Activated B cell treated with CpG ODN at 0.5 μM for 24 hours (primary cell): ENCODE measurements at regions of chr6 and their contacts with region 1.

Region 1: DNA sequence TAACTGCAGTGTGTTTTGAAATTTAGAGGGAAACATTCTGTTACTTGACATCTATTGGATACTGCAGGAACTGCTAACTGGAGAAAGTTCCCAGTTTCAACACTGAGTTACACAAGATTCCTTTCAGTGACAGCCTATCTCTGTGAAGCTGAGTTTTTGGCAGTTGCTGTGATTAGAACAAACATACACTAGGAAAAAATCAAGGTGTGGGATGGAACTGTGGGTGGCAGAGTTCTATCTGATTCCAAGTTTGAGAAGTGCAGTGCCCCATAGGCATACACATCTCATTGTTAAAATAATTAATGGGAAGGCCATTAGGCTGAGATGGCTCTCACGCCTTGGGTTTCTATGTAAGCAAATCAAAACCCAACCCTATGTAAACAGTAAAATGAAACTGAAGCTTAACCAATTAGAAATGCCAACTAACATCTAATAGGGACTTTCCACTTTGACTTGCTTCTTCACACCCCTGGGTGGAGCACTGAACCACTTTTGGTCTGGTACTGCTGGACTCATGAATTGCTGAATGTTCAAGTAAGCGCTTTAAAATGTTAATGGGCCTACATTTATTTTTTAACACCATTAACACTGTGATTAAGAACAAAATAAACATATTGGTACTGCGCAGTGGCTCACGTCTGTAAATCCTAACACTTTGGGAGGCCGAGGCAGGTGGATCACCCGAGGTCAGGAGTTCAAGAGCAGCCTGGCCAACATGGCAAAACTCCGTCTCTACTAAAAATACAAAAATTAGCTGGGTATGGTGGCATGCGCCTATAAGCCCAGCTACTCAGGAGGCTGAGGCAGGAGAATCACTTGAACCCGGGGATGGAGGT is 55.2 kb upstream of the TBC1D7 start:
- DNase-seq: no peak
- ATAC-seq: peak; percentile 98
- H3K4me3 Mint-ChIP-seq: peak overlapping the region; percentile 44
- H3K27ac Mint-ChIP-seq: peak overlapping the region; percentile 82
- H3K4me1 Mint-ChIP-seq: peaks cover 73% of the 10 kb centered on the region
- H3K27me3 Mint-ChIP-seq: no peaks in the 10 kb centered on the region
- CTCF ChIP-seq: no peak

Region 2: DNA sequence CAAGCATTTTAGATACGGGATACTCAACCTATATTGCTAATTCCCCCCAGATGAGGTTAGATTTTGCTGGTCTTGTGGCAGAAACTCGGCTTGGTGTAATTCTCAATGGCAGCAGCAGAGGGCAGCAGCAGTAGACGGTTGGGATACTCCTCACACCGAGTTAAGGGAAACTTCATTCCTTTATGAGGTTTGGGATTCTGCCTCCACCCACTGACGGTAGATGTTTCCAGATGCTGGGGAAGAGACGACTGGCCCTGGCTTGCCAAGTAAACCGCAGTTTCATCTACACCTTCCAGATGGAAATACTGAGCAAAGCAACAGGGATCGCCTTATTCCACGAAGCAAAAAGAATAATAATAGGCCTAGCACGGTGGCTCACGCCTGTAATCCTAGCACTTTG is 47.0 kb before region 1 on chr6:
- CTCF ChIA-PET with region 1: interaction called, 27 read pairs
- POLR2A ChIA-PET with region 1: interaction called, 4 read pairs
- intact Hi-C with region 1: loop called (anchors 1 kb)
- DNase-seq: peak; percentile 72
- ATAC-seq: peak; percentile 73
- H3K4me3 Mint-ChIP-seq: no peak overlapping the region
- H3K27ac Mint-ChIP-seq: no peak overlapping the region
- H3K4me1 Mint-ChIP-seq: peaks cover 51% of the 10 kb centered on the region
- H3K27me3 Mint-ChIP-seq: no peaks in the 10 kb centered on the region
- CTCF ChIP-seq: no peak

Region 3: GRCh38 chr6:13395272-13396237 is 12.0 kb after region 1 on chr6:
- CTCF ChIA-PET with region 1: interaction called, 5 read pairs
- POLR2A ChIA-PET with region 1: interaction called, 9 read pairs
- intact Hi-C with region 1: loop called (anchors 1 kb)
- DNase-seq: no peak
- ATAC-seq: peak; percentile 62
- H3K4me3 Mint-ChIP-seq: peak overlapping the region; percentile 47
- H3K27ac Mint-ChIP-seq: peak overlapping the region; percentile 91
- H3K4me1 Mint-ChIP-seq: peaks cover 56% of the 10 kb centered on the region
- H3K27me3 Mint-ChIP-seq: no peaks in the 10 kb centered on the region
- CTCF ChIP-seq: no peak

Region 4: DNA sequence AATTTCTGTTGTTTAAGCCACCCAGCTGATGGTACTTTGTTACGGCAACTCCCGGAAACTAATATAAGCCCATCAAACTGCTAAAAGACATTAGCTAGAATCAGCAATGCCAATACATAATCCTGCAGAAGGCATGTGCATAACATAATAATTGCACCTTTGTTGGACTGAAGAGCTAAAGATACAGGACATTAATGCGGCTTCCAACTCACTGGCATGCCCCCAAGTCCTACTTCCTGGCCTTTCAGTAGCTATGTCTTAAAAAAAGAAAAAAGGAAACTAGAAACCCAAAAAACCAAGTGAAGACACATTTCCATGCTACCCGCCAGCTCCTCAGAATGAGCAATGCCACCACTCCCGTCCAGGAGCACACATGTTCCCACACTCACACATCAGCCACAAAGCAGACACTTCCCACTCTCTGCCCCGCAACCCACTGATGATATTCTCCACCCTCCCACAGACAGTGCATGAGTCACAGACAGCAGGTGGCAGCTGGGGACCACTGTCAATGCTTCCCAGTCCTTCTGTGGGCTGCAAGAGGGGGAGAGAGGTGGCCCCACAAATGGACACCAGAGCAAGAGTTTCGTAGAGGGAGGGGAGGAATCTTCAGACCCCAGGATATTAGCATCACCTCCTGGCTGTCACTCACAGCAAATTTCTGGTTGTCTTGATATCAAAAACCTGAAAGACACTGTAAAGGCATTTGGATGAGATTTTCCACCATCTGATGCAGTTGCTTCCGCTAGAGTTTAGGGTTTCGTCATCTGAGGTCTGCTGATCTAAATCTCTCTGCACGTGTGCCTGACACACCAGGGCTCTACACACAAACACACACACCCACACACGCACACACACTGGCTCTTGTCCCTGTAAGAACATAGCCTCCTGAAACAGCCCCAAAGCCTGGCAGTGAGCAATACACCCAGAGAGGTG is 71.0 kb after region 1 on chr6:
- CTCF ChIA-PET with region 1: interaction called, 5 read pairs
- POLR2A ChIA-PET with region 1: interaction called, 3 read pairs
- intact Hi-C with region 1: loop called (anchors 1 kb)
- DNase-seq: peak; percentile 37
- ATAC-seq: peak; percentile 81
- H3K4me3 Mint-ChIP-seq: peak overlapping the region; percentile 65
- H3K27ac Mint-ChIP-seq: peak overlapping the region; percentile 85
- H3K4me1 Mint-ChIP-seq: peaks cover 60% of the 10 kb centered on the region
- H3K27me3 Mint-ChIP-seq: no peaks in the 10 kb centered on the region
- CTCF ChIP-seq: no peak

Region 5: GRCh38 chr6:13538084-13538483 is 154.5 kb after region 1 on chr6:
- CTCF ChIA-PET with region 1: interaction called, 18 read pairs
- POLR2A ChIA-PET with region 1: no interaction called
- intact Hi-C with region 1: loop called (anchors 1 kb)
- DNase-seq: no peak
- ATAC-seq: peak; percentile 58
- H3K4me3 Mint-ChIP-seq: no peak overlapping the region
- H3K27ac Mint-ChIP-seq: no peak overlapping the region
- H3K4me1 Mint-ChIP-seq: peaks cover 14% of the 10 kb centered on the region
- H3K27me3 Mint-ChIP-seq: no peaks in the 10 kb centered on the region
- CTCF ChIP-seq: no peak

Region 6: GRCh38 chr6:13604546-13605416 is 221.2 kb after region 1 on chr6:
- CTCF ChIA-PET with region 1: no interaction called
- POLR2A ChIA-PET with region 1: no interaction called
- intact Hi-C with region 1: no loop called
- DNase-seq: no peak
- ATAC-seq: no peak
- H3K4me3 Mint-ChIP-seq: no peak overlapping the region
- H3K27ac Mint-ChIP-seq: no peak overlapping the region
- H3K4me1 Mint-ChIP-seq: no peaks in the 10 kb centered on the region
- H3K27me3 Mint-ChIP-seq: no peaks in the 10 kb centered on the region
- CTCF ChIP-seq: no peak

Region 7: GRCh38 chr6:14584450-14584849 is 1200.9 kb after region 1 on chr6:
- CTCF ChIA-PET with region 1: no interaction called
- POLR2A ChIA-PET with region 1: no interaction called
- intact Hi-C with region 1: no loop called
- DNase-seq: no peak
- ATAC-seq: no peak
- H3K4me3 Mint-ChIP-seq: no peak overlapping the region
- H3K27ac Mint-ChIP-seq: no peak overlapping the region
- H3K4me1 Mint-ChIP-seq: peaks cover 4% of the 10 kb centered on the region
- H3K27me3 Mint-ChIP-seq: no peaks in the 10 kb centered on the region
- CTCF ChIP-seq: no peak